Ascending aorta (tissue), 2 donors: ENCODE measurements at regions of chr21 and their contacts with region 1.

Region 1: GRCh38 chr21:32819694-32820093 is 48.1 kb upstream of the PAXBP1 start:
- DNase-seq: peak in 1 of 2 donors; percentile 73
- H3K4me3 ChIP-seq: no peak overlapping the region
- H3K27ac ChIP-seq: peak overlapping the region in 1 of 2 donors; percentile 16
- H3K4me1 ChIP-seq: peaks cover 0 to 3% of the 10 kb centered on the region in 2 donors
- H3K27me3 ChIP-seq: no peaks in the 10 kb centered on the region
- CTCF ChIP-seq: no peak

Region 2: GRCh38 chr21:33619726-33620125 is 800.0 kb after region 1 on chr21:
- intact Hi-C with region 1: loop called (anchors 10 kb)
- DNase-seq: no peak
- H3K4me3 ChIP-seq: no peak overlapping the region
- H3K27ac ChIP-seq: no peak overlapping the region
- H3K4me1 ChIP-seq: no peaks in the 10 kb centered on the region
- H3K27me3 ChIP-seq: no peaks in the 10 kb centered on the region
- CTCF ChIP-seq: no peak